Activated CD4-positive, alpha-beta T cell treated with anti-CD3 and anti-CD28 coated beads for 36 hours (primary cell): ENCODE measurements at regions of chr5 and their contacts with region 1.

Region 1: DNA sequence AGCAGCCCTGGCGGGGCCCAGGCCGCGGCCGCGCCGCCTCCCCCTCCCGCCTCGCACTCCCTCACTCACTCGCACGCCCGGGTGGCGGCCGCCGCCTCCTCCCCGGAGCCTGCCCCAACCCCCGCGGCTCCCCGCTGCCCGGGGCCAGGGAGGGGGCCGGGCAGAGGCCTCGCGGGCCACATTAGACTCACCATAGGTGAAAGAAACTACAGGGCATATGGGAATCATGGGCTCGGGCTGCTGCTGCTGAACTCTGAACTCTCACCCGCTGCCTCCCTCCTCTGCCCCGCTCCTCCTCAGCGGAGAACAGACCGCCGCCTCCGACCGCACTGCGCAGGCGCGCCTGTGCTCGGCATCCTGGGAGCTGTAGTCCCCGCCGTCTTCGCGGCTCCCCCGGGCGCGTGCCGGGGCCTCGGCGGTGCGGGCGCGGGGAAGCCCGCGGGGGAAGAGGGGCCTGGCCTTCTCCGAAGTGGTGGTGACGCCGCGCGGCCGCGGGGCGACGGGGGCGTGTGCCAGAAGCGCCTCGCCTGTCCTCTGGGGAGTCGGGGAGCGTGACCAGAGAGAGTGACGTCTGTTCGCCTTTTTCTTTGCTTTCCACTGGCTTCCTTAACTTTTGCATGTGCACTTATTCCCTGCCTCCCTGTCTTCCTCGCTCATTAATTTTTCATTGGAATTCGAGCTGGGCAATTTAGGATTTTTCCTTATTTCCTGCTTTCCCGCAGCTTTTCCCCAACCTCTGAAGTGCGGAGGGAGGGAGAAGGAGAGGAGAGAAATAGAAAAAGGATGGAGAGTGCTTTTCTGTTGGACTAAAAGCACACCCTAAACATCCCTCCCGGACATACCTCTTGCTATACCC is at the start of gene ZFR:
- DNase-seq: peak; percentile 97
- ATAC-seq: peak; percentile 90
- H3K4me3 Mint-ChIP-seq: peak within 1 kb of the TSS; percentile 99
- H3K27ac Mint-ChIP-seq: peak within 1 kb of the TSS; percentile 99
- H3K4me1 Mint-ChIP-seq: peaks cover 34% of the 10 kb centered on the region
- H3K27me3 Mint-ChIP-seq: no peaks in the 10 kb centered on the region
- total RNA-seq, gene ZFR: 60.6 to 81.4 TPM

Region 2: GRCh38 chr5:32206509-32207354 is 237.9 kb before region 1 on chr5:
- CTCF ChIA-PET with region 1: no interaction called
- POLR2A ChIA-PET with region 1: no interaction called
- intact Hi-C with region 1: loop called in 1 of 2 experiments (anchors 2 kb)
- DNase-seq: no peak
- ATAC-seq: no peak
- H3K4me3 Mint-ChIP-seq: no peak overlapping the region
- H3K27ac Mint-ChIP-seq: peak overlapping the region; percentile 82
- H3K4me1 Mint-ChIP-seq: peaks cover 39% of the 10 kb centered on the region
- H3K27me3 Mint-ChIP-seq: peaks cover under 1% of the 10 kb centered on the region

Region 3: DNA sequence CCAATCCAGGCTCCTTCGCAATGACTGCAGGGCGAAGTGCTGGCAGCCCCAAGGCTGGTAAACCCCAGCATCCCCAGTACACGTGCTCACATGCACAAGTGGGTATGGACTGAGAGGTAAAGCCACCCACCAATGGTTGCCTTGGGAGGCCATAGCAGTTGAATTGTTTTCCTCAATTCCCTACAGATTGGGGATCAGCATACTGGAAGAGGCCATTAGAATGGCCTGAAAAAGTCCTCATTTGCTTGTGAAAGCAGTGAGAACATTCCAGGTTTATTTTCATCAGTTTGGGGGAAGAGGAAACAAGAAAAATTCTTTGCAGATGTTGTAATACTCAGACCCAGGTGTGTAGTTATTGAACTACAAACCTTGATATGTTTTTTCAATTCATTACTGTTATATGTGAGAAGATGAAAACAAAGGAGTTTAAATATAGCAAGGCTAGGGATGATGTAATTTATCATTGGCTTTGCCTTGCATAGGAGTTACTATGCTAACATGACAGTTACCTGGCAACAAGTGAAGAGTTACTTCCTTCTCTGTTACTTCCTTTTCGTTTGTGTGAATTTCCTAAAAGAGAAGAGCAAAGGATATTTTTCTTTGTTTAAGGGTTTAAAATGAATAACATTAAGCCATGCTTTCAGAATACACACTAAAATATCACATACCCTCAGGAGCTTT is 168.3 kb before region 1 on chr5:
- CTCF ChIA-PET with region 1: no interaction called
- POLR2A ChIA-PET with region 1: no interaction called
- intact Hi-C with region 1: loop called in 1 of 2 experiments (anchors 2 kb)
- DNase-seq: no peak
- ATAC-seq: no peak
- H3K4me3 Mint-ChIP-seq: no peak overlapping the region
- H3K27ac Mint-ChIP-seq: peak overlapping the region; percentile 76
- H3K4me1 Mint-ChIP-seq: peaks cover 53% of the 10 kb centered on the region
- H3K27me3 Mint-ChIP-seq: no peaks in the 10 kb centered on the region

Region 4: GRCh38 chr5:32428426-32428825 is 16.2 kb before region 1 on chr5:
- CTCF ChIA-PET with region 1: no interaction called
- POLR2A ChIA-PET with region 1: no interaction called
- intact Hi-C with region 1: no loop called
- DNase-seq: no peak
- ATAC-seq: no peak
- H3K4me3 Mint-ChIP-seq: no peak overlapping the region
- H3K27ac Mint-ChIP-seq: no peak overlapping the region
- H3K4me1 Mint-ChIP-seq: peaks cover 50% of the 10 kb centered on the region
- H3K27me3 Mint-ChIP-seq: no peaks in the 10 kb centered on the region

Region 5: DNA sequence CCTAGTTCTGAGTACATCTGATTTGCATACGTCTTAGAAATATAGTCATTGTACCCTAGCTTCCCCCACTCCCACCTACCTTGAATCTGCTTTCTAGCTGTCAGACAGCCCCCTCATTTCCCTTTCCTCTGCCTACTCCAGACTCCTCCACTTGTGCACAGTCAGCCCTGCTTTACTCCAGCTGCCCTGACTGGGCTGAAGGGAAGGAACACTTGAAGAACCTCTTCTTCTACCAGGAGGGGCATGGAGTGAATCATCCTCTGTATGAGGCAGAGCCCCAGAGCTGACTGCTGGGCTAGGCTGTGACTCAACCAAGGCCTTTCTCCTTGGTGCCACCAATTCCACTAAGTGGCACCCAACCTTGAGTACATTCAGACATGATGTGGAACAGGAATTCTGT is 18.0 kb after region 1 on chr5:
- CTCF ChIA-PET with region 1: interaction called, 3 read pairs
- POLR2A ChIA-PET with region 1: no interaction called
- intact Hi-C with region 1: loop called (anchors 1 kb)
- DNase-seq: peak; percentile 73
- ATAC-seq: peak; percentile 100
- H3K4me3 Mint-ChIP-seq: no peak overlapping the region
- H3K27ac Mint-ChIP-seq: peak overlapping the region; percentile 90
- H3K4me1 Mint-ChIP-seq: peaks cover 17% of the 10 kb centered on the region
- H3K27me3 Mint-ChIP-seq: no peaks in the 10 kb centered on the region